Activated CD4-positive, alpha-beta T cell treated with anti-CD3 and anti-CD28 coated beads for 36 hours (primary cell): ENCODE measurements at regions of chr6 and their contacts with region 1.

Region 1: DNA sequence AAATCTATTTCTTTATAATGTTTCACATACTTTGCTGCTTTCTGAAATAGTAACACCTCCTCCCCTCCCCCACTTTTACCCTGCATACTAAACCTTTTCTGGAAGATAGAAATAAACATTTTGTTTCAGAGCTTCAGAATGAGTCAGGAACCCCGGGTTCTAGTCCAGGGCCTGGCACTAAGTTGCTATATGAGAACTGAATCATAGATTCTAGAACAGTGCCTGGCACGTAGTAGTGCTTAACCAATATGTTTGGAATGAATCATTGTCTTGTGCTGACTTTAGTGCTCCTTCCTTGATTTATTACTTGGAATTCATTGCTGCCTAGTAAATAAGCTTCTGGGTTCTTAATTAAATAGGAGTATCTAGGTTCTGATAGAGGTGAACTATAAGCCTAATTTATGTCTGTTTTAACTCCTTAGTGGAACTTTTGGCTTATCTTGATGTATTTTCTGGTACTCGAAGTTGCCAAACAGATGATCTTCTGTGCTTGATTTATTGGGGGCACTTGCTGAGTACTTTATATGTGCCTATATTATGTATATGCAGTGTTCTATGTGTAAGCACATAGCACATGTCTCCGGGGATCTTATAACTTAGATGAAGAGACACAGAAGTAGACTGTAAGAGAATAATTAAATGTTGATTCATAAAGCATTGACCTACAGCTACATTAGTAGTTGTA is 18.6 kb downstream of the TAB2 start:
- DNase-seq: peak; percentile 83
- ATAC-seq: peak; percentile 95
- H3K4me3 Mint-ChIP-seq: peak overlapping the region; percentile 59
- H3K27ac Mint-ChIP-seq: peak overlapping the region; percentile 99
- H3K4me1 Mint-ChIP-seq: peaks cover 85% of the 10 kb centered on the region
- H3K27me3 Mint-ChIP-seq: no peaks in the 10 kb centered on the region

Region 2: GRCh38 chr6:149147938-149148718 is 187.9 kb before region 1 on chr6:
- CTCF ChIA-PET with region 1: no interaction called
- POLR2A ChIA-PET with region 1: no interaction called
- intact Hi-C with region 1: loop called (anchors 5 kb)
- DNase-seq: no peak
- ATAC-seq: peak; percentile 63
- H3K4me3 Mint-ChIP-seq: peak overlapping the region; percentile 9
- H3K27ac Mint-ChIP-seq: peak overlapping the region; percentile 82
- H3K4me1 Mint-ChIP-seq: peaks cover 60% of the 10 kb centered on the region
- H3K27me3 Mint-ChIP-seq: no peaks in the 10 kb centered on the region

Region 3: DNA sequence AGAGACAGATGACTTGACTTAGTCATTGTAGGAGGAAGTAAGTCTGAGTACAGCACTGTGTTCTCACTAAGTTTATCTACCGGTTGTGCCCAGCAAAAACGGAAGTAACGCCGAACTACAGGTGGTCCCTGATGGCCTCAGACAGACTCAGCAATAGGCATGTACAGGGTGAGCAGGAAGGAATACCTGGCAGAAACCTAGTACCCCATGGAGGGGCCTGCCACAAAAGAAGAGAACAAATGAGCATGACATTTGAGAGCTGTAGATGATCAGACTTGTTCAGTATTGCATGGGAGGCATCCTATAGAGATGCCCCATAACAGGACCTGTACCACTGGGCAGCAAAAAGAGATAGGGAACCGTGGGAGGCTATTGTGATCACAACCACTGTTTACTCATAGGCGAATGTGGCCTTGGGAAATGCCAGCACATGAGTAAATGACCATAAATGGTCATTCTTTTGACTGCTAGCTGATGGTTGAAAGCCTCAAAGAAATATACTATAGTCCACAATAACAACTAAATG is 125.0 kb before region 1 on chr6:
- CTCF ChIA-PET with region 1: no interaction called
- POLR2A ChIA-PET with region 1: no interaction called
- intact Hi-C with region 1: loop called in 1 of 2 experiments (anchors 5 kb)
- DNase-seq: peak; percentile 36
- ATAC-seq: peak; percentile 54
- H3K4me3 Mint-ChIP-seq: no peak overlapping the region
- H3K27ac Mint-ChIP-seq: peak overlapping the region; percentile 82
- H3K4me1 Mint-ChIP-seq: peaks cover 3% of the 10 kb centered on the region
- H3K27me3 Mint-ChIP-seq: no peaks in the 10 kb centered on the region

Region 4: GRCh38 chr6:149235130-149235561 is 100.9 kb before region 1 on chr6:
- CTCF ChIA-PET with region 1: no interaction called
- POLR2A ChIA-PET with region 1: no interaction called
- intact Hi-C with region 1: loop called (anchors 1 kb)
- DNase-seq: peak; percentile 20
- ATAC-seq: no peak
- H3K4me3 Mint-ChIP-seq: no peak overlapping the region
- H3K27ac Mint-ChIP-seq: peak overlapping the region; percentile 98
- H3K4me1 Mint-ChIP-seq: peaks cover 44% of the 10 kb centered on the region
- H3K27me3 Mint-ChIP-seq: no peaks in the 10 kb centered on the region

Region 5: DNA sequence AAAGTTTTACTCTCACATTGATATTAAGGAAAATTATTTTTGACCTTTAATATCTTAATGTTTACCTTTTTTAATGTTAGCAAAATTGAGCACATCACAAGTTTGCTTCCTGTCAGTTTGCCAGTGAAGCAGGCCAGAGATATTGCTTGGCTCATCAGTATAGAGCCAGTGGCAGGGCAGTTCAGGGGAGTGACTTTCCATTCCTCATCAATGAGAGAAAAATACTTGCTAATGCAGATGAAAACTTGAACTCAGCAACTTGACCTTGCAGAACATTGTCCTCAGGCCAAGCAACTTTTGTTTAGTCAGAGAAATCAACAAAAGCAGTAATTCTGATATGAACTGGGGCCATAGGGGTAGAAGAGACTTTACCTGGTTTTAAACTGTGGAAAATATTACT is 11.6 kb before region 1 on chr6:
- CTCF ChIA-PET with region 1: interaction called, 49 read pairs
- POLR2A ChIA-PET with region 1: interaction called, 13 read pairs
- intact Hi-C with region 1: loop called (anchors 1 kb)
- DNase-seq: peak; percentile 12
- ATAC-seq: peak; percentile 21
- H3K4me3 Mint-ChIP-seq: no peak overlapping the region
- H3K27ac Mint-ChIP-seq: peak overlapping the region; percentile 70
- H3K4me1 Mint-ChIP-seq: peaks cover 84% of the 10 kb centered on the region
- H3K27me3 Mint-ChIP-seq: no peaks in the 10 kb centered on the region

Region 6: GRCh38 chr6:149499066-149499465 is 163.0 kb after region 1 on chr6:
- CTCF ChIA-PET with region 1: no interaction called
- POLR2A ChIA-PET with region 1: no interaction called
- intact Hi-C with region 1: loop called (anchors 5 kb)
- DNase-seq: no peak
- ATAC-seq: no peak
- H3K4me3 Mint-ChIP-seq: no peak overlapping the region
- H3K27ac Mint-ChIP-seq: peak overlapping the region; percentile 76
- H3K4me1 Mint-ChIP-seq: peaks cover 85% of the 10 kb centered on the region
- H3K27me3 Mint-ChIP-seq: no peaks in the 10 kb centered on the region